Spleen (tissue), 13 donors: ENCODE measurements at regions of chr19 and their contacts with region 1.

Region 1: GRCh38 chr19:47540728-47541127 is 25.9 kb upstream of the NAPA start:
- DNase-seq: no peak
- H3K4me3 ChIP-seq: no peak overlapping the region
- H3K27ac ChIP-seq: peak overlapping the region in 1 of 8 donors; percentile 11
- H3K4me1 ChIP-seq: peaks cover 0 to 43% (median 6%) of the 10 kb centered on the region in 6 donors
- H3K27me3 ChIP-seq: peaks cover 0 to 39% (median 18%) of the 10 kb centered on the region in 7 donors
- CTCF ChIP-seq: peak in 1 of 11 experiments; percentile 9
- POLR2A ChIP-seq: no peak

Region 2: GRCh38 chr19:47707135-47707925 is 166.6 kb after region 1 on chr19:
- intact Hi-C with region 1: loop called (anchors 10 kb)
- DNase-seq: peak; percentile 87
- H3K4me3 ChIP-seq: no peak overlapping the region
- H3K27ac ChIP-seq: no peak overlapping the region
- H3K4me1 ChIP-seq: peaks cover 0 to 6% (median 0%) of the 10 kb centered on the region in 6 donors
- H3K27me3 ChIP-seq: peaks cover 0 to 39% (median 0%) of the 10 kb centered on the region in 7 donors
- CTCF ChIP-seq: peak; percentile 35 to 85 (median 81)
- POLR2A ChIP-seq: no peak